ENCODE measurements at regions of chr7 and their contacts with region 1.

Region 1: DNA sequence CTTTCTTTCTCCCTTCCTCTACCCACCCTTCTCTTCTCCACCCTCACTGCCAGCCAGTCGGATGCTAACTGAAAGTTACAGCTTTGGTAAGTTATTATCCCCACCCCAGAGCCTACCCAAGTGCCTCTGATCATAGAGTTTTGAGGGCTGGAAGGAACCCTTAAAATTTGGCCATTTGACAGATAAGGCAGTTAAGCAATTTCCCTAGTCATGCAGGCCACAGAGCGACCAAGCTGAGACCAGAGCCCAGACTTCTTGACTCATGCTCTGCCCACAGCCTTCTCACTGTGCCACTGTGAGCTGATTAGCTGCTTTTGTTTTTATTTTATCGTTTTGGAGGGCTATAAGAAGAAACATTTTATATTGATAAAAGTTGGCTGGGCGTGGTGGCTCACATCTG is 17.2 kb downstream of the SAP25 start:
- DNase-seq: no peak
- H3K4me3 ChIP-seq: no peak overlapping the region
- H3K27me3 ChIP-seq: no peaks in the 10 kb centered on the region
- CTCF ChIP-seq: no peak

Region 2: DNA sequence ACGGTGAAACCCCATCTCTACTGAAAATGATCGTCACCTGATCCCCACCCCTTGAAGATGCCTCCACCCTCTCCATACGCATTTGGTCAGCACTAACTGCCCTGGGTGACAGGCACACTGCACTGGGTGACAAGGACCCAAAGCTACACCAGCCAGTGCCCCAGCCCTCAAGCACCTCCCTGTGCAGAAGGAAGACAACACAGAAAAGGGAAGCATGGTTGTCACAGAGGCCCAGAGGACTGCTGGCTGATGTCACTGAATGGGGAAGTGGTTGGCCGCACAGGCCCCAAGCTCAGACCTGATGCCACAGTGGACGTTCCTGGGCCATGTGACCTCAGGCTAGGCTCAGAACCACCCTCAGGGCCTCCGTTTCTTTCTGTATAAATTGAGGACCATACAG is 187.4 kb before region 1 on chr7:
- CTCF ChIA-PET with region 1: no interaction called
- POLR2A ChIA-PET with region 1: no interaction called
- DNase-seq: no peak
- H3K4me3 ChIP-seq: no peak overlapping the region
- H3K27me3 ChIP-seq: no peaks in the 10 kb centered on the region
- CTCF ChIP-seq: no peak

Region 3: GRCh38 chr7:100469227-100470044 is 87.1 kb before region 1 on chr7:
- CTCF ChIA-PET with region 1: interaction called, 50 read pairs
- POLR2A ChIA-PET with region 1: interaction called, 16 read pairs
- DNase-seq: no peak
- H3K4me3 ChIP-seq: no peak overlapping the region
- H3K27me3 ChIP-seq: no peaks in the 10 kb centered on the region
- CTCF ChIP-seq: peak; percentile 98

Region 4: GRCh38 chr7:100478966-100479665 is 77.4 kb before region 1 on chr7 and contains the start of gene TSC22D4:
- CTCF ChIA-PET with region 1: interaction called, 34 read pairs
- POLR2A ChIA-PET with region 1: no interaction called
- DNase-seq: peak; percentile 63
- H3K4me3 ChIP-seq: peak within 1 kb of the TSS; percentile 98
- H3K27me3 ChIP-seq: no peaks in the 10 kb centered on the region
- CTCF ChIP-seq: no peak
- polyA plus RNA-seq, gene TSC22D4: 9.7 and 20.7 TPM in 2 replicates

Region 5: DNA sequence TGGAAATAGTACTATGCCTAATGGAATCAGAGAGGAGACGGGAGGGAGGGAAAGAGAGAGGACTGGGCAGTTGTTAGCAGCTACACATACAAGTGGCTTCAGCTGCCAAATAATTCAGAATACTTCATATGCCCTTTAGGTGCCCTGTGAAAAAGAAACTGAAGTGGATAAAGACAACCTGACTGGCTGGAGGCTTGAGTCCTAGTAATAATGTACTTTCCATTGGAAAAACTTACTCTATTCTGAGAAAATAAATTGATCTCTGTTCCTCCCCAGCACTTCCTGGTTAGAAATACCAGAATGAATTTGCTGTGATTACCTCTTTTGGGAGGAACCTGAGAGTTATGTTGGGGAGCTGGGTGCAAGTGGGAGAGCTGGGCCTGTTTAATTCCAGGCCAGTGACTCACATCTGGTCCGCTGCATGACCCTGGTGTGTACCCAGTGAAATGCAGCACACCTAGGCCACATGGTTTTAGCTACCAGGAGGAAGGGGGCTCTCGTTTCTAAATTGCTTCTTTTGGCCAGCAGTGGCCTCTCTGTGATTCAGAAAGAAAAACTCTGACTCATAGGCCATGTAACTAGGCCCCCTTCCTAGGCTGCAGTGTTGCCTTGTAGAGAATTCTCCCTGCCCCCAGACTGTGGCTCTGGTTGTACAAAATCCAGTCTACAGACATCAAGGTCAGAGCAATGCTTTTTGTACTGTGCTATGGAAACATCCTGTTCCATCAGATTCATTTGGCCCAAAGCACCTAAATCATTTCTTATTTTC is 11.0 kb before region 1 on chr7:
- CTCF ChIA-PET with region 1: interaction called, 30 read pairs
- POLR2A ChIA-PET with region 1: no interaction called
- DNase-seq: peak; percentile 40
- H3K4me3 ChIP-seq: no peak overlapping the region
- H3K27me3 ChIP-seq: no peaks in the 10 kb centered on the region
- CTCF ChIP-seq: peak; percentile 32

Region 6: GRCh38 chr7:100586266-100587025 is 29.9 kb after region 1 on chr7 and contains the start of gene FBXO24:
- CTCF ChIA-PET with region 1: interaction called, 12 read pairs
- POLR2A ChIA-PET with region 1: no interaction called
- DNase-seq: peak; percentile 99
- H3K4me3 ChIP-seq: peak within 1 kb of the TSS; percentile 98
- H3K27me3 ChIP-seq: no peaks in the 10 kb centered on the region
- CTCF ChIP-seq: no peak
- polyA plus RNA-seq, gene FBXO24: 0.33 and 0.40 TPM in 2 replicates